Head of caudate nucleus (tissue), 42 donors: ENCODE measurements at regions of chr3 and their contacts with region 1.

Region 1: DNA sequence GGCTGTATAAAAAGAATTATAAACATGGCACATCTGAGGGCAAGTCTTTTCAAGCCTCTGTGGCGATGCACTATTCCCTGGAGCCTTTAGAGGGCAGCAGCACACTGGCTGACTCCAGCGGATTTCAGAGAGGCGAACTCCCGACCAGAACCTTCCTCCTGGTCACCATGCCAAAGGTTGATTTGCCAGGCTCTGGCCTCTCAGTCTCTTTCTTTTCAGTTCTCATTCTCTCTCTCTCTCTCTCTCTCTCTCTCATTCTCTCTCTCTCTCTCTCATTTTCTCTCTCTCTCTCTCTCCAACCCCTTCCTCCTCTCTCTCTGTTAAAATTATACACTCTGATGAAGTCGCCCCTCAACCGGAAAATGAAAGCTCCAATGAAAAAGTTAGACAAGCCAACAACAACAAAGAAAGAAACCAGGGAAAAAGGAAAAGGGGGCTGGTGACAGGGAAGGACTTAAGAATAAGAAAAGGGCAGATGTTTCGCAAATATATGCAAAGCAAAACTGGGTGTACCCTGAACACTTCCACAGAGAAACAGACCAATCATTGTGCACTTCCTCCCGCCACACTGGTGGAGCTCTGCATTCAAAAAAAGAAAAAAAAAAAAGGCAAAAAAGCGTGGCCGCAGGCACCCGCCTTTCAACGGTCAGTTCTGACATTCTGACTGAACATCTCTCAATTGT is 90.2 kb downstream of the TIGIT start:
- DNase-seq: peak; percentile 75 to 97 (median 90)

Region 2: DNA sequence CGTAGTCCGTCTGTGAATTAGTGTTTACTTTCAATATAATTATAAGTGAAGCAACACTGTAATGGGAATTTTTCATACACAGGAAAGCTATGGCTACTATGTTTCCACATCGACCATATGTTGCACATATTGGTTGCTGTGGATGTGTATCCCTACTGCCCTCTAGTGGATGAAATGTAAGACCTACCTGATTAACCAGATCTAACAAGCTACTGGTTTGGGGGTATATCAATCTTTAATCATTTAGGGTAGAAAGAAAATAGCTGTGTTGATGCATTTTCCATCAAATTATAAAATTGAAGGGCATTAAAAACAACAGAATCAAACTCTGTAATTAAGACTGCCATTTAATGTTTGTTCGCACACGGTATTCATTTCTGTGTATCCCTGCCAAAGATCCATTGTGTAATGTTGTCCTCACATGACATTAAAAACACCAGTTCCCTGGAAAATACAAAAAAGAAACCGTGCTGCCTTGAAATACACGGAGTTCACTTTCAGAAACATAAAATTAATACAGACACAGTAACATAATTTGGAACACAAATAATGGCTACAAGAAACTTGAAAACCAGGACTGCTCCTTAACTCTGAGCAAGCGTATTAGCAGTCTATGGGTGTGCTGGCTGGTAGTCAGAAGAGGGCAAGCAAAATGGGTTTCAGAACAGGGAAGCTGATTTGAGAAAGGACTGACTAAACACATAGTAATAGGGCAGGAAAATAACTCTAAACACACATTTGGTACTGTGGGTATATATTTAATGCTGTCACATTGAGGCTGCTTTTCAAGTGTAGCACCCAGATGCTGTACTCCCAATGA is 34.9 kb after region 1 on chr3:
- intact Hi-C with region 1: loop called (anchors 2 kb)
- DNase-seq: peak in 2 of 42 donors; percentile 36 to 54

Region 3: GRCh38 chr3:114454551-114455251 is 70.7 kb after region 1 on chr3:
- intact Hi-C with region 1: loop called (anchors 5 kb)
- DNase-seq: peak in 37 of 42 donors; percentile 16 to 83 (median 54)

Region 4: DNA sequence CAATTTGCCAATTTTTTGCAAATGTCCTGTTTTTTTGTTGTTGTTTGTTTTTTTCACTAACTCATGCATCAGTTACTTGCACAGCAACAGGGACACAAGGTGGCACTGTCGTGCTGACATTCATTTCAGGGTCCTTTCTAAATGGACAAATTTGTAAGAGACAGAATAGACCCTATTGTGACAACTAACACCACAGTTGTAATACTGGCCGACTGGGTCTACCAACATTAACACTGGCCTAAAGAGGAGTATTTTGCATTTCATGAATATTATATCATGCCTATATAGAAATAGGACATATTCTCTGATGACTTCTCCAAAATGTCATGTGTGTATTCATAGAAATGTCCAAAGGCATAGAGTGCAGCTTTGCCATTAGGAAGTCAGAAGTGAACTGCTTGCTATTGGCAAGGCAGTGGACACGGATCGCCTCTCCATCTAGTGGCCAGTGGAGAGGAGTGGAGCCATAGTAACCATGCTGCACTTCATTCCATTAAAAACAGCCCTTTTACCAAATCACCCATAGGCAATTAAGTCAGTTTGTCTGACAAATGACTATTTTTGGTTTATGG is 708.3 kb after region 1 on chr3:
- intact Hi-C with region 1: loop called (anchors 5 kb)
- DNase-seq: peak; percentile 53 to 91 (median 81)